ENCODE measurements at regions of chr2 and their contacts with region 1.

Region 1: GRCh38 chr2:116545286-116546068 is 1269.0 kb upstream of the DDX18 start:
- DNase-seq: no peak
- H3K4me3 ChIP-seq: no peak overlapping the region
- H3K27ac ChIP-seq: no peak overlapping the region
- H3K4me1 ChIP-seq: no peaks in the 10 kb centered on the region
- H3K27me3 ChIP-seq: no peaks in the 10 kb centered on the region
- CTCF ChIP-seq: no peak
- POLR2A ChIP-seq: no peak

Region 2: GRCh38 chr2:116580209-116580608 is 34.7 kb after region 1 on chr2:
- intact Hi-C with region 1: no loop called
- DNase-seq: no peak
- H3K4me3 ChIP-seq: no peak overlapping the region
- H3K27ac ChIP-seq: no peak overlapping the region
- H3K4me1 ChIP-seq: no peaks in the 10 kb centered on the region
- H3K27me3 ChIP-seq: no peaks in the 10 kb centered on the region
- CTCF ChIP-seq: no peak
- POLR2A ChIP-seq: no peak

Region 3: GRCh38 chr2:117137371-117137770 is 591.9 kb after region 1 on chr2:
- intact Hi-C with region 1: loop called (anchors 5 kb)
- DNase-seq: no peak
- H3K4me3 ChIP-seq: no peak overlapping the region
- H3K27ac ChIP-seq: no peak overlapping the region
- H3K4me1 ChIP-seq: no peaks in the 10 kb centered on the region
- H3K27me3 ChIP-seq: no peaks in the 10 kb centered on the region
- CTCF ChIP-seq: no peak
- POLR2A ChIP-seq: no peak